Upper lobe of right lung (tissue), 1 donor: ENCODE measurements at regions of chr2 and their contacts with region 1.

Region 1: GRCh38 chr2:72862239-72862988 is 24.8 kb upstream of the SPR start:
- DNase-seq: peak; percentile 93
- ATAC-seq: peak; percentile 100
- H3K4me3 ChIP-seq: no peak overlapping the region
- H3K27ac ChIP-seq: no peak overlapping the region
- H3K4me1 ChIP-seq: peaks cover 4% of the 10 kb centered on the region
- H3K27me3 ChIP-seq: peaks cover 12% of the 10 kb centered on the region
- CTCF ChIP-seq: peak; percentile 99

Region 2: GRCh38 chr2:72778410-72778809 is 84.0 kb before region 1 on chr2:
- intact Hi-C with region 1: loop called (anchors 5 kb)
- DNase-seq: no peak
- ATAC-seq: no peak
- H3K4me3 ChIP-seq: no peak overlapping the region
- H3K27ac ChIP-seq: no peak overlapping the region
- H3K4me1 ChIP-seq: peaks cover 19% of the 10 kb centered on the region
- H3K27me3 ChIP-seq: no peaks in the 10 kb centered on the region
- CTCF ChIP-seq: no peak

Region 3: DNA sequence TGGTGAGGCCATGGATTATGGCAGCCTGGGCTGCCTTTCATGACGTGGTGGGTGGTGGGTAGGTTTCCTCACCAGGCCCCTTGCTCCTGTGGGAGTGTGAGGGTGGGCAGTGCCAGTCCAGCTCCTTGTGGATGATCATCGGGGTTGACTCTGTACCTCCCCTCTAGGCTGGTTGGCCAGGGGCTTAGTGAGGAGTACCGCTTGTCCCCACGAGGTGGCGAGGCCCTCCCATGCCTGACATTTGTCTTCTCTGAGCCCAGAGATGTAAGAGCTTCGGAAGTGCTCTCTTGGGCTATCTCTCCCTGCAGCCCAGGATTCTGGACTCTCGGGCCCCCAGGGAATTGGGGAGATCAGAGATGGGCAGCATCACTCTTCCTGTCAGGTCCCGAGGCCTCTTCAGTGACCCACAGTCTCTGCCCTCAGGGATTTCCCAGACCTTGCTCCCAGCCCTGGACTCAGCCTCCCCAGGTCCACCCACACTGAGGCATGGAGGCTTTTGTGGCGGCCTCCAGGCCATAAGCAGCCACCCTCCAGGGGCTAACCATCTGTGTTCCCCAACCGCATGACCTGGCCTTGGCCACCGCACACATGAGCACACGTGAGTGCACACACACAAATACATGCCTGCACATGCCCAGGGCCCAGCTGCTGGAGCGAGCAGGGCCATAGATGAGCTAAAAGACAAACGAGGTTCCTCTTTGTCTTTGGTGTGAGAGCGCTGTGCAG is 31.3 kb after region 1 on chr2:
- intact Hi-C with region 1: no loop called
- DNase-seq: no peak
- ATAC-seq: peak; percentile 46
- H3K4me3 ChIP-seq: no peak overlapping the region
- H3K27ac ChIP-seq: no peak overlapping the region
- H3K4me1 ChIP-seq: peaks cover 9% of the 10 kb centered on the region
- H3K27me3 ChIP-seq: peaks cover 15% of the 10 kb centered on the region
- CTCF ChIP-seq: peak; percentile 52